Activated T-helper 1 cell treated with anti-CD3 and anti-CD28 coated beads, Interleukin-12 subunit alpha, Interleukin-12 subunit beta, Interleukin-2, Interleukin-4 antibody, amounts not matched to agents 30 ng/mL and 10 ng/mL and 1 ng/mL, durations not matched to agents 14 hours and 24 hours and 36 hours (primary cell): ENCODE measurements at regions of chr3 and their contacts with region 1.

Region 1: DNA sequence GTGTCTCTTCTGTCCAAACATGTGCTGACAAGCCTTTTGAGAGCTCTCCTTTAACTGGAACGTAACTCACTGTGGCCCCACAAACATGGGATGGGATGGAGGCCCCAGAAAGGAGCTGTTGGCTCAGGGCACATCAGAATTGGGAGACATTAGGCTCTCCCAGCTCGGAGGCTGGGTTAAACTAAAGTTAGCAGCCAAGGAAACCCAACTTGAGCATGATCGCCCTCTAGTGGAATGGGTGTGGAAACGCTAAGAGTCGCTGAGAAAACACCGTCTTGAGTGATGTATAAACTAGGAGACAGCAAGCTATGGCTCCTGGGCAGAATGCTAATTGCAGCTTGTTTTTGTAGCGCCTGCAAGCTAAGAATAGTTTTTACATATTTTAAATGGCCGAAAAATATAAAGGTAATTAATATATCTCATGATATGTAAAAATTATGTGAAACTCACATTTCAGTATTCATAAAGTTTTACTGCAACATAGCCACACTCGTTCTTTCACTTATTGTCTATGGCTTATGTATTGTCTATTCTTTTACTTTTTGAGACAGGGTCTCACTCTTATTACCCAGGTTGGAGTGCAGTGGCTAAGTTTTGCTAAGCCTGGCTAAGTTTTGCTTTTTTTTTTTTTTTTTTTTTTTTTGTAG is 138.8 kb upstream of the HACD2 start:
- DNase-seq: peak; percentile 19
- H3K4me3 Mint-ChIP-seq: no peak overlapping the region
- H3K27ac Mint-ChIP-seq: no peak overlapping the region
- H3K4me1 Mint-ChIP-seq: peaks cover 3% of the 10 kb centered on the region
- H3K27me3 Mint-ChIP-seq: peaks cover 7% of the 10 kb centered on the region

Region 2: DNA sequence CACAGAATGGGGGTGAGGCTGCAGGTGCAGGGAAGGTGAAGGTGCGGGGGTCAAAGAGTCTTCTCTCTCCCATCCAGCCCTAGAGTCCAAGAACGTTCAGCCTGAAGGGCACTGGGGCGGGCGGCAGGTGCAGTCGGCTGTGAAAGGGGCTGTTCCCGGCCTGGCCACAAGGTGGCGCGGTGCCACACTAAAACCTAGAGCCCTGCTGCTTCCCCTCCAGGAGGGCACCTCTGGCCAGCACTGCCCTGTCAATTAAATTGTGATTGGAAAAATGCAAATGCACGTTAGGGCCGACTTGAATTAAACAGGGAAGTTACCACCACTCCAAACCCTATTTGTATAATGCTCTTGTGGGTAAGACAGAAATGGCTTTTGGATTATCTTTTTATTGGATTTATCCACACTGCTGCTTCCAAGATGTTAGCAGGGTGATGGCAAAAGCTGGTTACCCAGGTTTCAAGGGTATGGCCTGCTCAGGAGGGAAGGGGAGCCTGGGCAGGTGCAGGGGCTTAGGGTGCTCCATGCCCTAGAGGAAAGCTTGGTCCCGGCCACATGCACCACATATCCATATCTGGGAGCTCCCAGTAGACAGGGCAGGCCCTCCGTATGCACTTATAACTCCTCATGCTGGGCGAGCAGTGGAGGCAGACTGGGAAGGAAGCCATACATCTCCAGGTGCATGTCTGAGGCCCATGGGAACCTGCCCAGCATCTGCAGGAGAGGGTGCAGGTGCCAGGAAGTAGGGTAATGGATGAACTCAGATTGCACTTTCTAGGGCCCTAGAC is 394.6 kb before region 1 on chr3:
- intact Hi-C with region 1: loop called (anchors 5 kb)
- DNase-seq: peak; percentile 50
- H3K4me3 Mint-ChIP-seq: no peak overlapping the region
- H3K27ac Mint-ChIP-seq: no peak overlapping the region
- H3K4me1 Mint-ChIP-seq: no peaks in the 10 kb centered on the region
- H3K27me3 Mint-ChIP-seq: peaks cover 2% of the 10 kb centered on the region

Region 3: DNA sequence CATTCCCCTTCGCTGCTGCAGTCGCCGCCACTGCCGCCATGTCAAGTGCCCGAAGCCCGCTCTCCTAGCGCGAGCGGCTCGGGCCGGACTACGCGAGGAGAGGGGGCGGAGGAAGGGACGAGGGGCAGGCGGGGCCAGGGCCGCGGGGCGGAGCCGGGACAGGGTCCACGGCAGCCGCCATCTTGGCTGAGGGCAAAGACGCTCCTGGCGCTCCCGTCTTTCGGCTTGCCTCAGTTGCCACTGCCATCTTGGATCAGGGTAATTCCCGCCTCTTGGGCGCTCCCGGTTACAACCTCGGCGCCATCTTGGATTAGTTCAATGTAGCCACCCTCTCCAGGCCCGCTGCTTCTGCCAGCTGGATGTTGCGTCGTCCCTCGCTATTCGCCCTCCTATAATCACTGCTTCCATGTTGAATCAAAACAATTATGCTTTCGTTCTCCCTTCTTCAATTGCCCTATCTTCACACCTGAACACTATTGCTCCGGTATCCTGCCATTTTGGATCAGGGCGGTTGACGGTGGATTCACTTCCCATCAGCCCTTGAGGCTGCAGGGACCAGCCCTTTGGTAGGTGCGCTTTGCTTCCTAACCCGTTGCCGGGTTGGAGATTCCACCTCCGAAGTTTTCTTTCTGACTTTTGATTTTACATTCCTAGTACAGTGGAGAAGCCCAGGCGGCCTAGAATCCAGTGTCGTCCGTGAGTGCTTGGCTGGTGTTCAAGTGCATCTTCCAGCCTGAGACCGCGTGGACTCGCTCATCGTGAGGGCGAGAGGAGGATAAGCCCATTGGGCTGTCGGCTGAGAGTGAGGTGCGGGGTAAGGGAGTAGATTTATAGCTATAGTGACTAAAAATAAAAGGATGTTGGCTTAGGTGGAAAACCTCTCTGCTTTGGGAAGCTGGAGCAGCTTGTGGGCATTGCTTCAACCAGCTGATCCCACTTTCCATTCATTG is 138.4 kb before region 1 on chr3 and contains the start of gene HACD2:
- intact Hi-C with region 1: loop called (anchors 2 kb)
- DNase-seq: peak; percentile 93
- H3K4me3 Mint-ChIP-seq: no peak within 1 kb of the TSS
- H3K27ac Mint-ChIP-seq: peak within 1 kb of the TSS; percentile 63
- H3K4me1 Mint-ChIP-seq: peaks cover 23% of the 10 kb centered on the region
- H3K27me3 Mint-ChIP-seq: no peaks in the 10 kb centered on the region
- total RNA-seq, gene HACD2: 31.5 TPM in 2 replicates

Region 4: DNA sequence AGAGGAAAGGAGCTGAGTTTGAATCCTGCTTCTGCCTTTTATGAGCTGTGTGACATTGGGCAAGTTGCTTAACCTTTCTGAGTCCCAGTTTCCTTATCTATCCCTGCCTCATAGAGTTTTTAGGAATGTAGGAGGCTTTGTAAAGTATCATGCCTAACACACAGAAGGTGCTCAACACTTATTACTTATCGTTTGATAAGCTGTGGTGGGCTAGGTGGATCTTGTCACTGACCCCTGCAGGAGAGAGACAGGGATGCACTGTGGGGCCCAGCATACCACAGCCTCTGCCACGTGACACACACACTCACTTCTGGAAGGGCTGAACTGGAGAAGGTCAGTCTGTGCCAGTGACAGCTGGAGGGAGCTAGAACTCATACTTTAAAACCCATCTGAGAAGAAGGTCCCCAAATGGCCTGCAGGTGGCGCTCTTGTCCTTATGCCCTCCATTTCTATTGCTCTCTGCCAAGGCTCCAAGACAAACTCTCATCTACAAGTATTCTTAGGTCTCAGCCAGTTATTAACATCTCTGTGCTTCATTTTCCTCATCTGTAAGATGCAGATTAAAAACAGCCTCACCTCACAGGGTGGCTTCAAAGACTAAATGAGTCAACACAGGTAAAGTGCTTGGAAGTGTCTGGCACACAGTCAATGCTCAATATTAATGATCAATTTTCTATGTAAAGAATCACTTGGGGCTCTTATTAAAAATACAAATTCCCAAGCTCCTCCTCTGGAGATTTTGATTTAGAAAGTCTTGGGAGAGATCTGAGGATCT is 81.3 kb before region 1 on chr3:
- intact Hi-C with region 1: loop called (anchors 1 kb)
- DNase-seq: peak; percentile 27
- H3K4me3 Mint-ChIP-seq: no peak overlapping the region
- H3K27ac Mint-ChIP-seq: no peak overlapping the region
- H3K4me1 Mint-ChIP-seq: no peaks in the 10 kb centered on the region
- H3K27me3 Mint-ChIP-seq: peaks cover 2% of the 10 kb centered on the region

Region 5: GRCh38 chr3:123652346-123652984 is 71.2 kb before region 1 on chr3:
- intact Hi-C with region 1: loop called (anchors 2 kb)
- DNase-seq: no peak
- H3K4me3 Mint-ChIP-seq: no peak overlapping the region
- H3K27ac Mint-ChIP-seq: no peak overlapping the region
- H3K4me1 Mint-ChIP-seq: no peaks in the 10 kb centered on the region
- H3K27me3 Mint-ChIP-seq: peaks cover 2% of the 10 kb centered on the region

Region 6: GRCh38 chr3:124078953-124079911 is 355.6 kb after region 1 on chr3:
- intact Hi-C with region 1: loop called (anchors 5 kb)
- DNase-seq: no peak
- H3K4me3 Mint-ChIP-seq: no peak overlapping the region
- H3K27ac Mint-ChIP-seq: no peak overlapping the region
- H3K4me1 Mint-ChIP-seq: no peaks in the 10 kb centered on the region
- H3K27me3 Mint-ChIP-seq: peaks cover 3% of the 10 kb centered on the region